ENCODE measurements at regions of chr9 and their contacts with region 1.

Region 1: DNA sequence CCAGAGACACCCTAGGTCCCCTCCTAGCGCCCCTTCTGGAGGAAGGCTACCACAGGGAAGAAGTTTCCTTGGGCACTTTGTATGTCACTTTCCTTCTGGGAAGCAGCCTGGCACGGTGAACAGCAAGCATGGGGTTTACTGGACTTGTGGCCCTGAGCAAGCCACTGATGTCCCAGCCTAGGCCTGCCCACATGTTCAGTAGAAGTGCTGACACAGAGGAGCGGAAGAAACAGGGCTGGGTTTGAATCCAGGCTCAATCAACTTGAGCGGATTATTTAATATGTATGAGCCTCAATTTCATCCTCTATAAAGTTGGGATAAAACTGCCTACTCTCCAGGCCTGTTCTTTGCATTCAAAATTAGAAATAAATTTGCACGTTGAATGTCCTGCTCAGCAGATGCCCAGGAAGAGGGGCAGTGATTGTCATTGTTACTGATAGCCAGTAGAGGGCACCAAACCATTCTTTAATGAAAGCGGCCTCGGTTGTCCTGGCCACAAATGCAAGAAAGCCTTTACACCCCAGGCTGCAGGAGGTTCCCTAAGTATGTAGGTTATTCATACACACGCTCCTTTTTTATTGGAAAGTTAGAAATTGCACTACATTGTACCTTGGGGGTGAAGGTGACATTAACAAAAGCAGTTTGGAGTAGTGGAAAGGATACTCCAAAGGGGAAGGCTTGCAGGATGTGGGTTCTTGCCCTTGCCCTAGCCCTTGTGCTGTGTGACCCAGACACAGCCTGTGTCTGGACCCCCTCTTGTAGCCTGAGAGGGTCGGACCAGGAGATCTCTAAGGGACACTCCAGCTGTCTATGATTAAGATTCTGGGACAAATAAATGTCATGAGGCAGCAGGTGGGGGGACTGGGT is 13.4 kb upstream of the XPA start:
- DNase-seq: peak; percentile 78
- ATAC-seq: peak; percentile 91
- H3K4me3 ChIP-seq: no peak overlapping the region
- H3K4me3 Mint-ChIP-seq: no peak overlapping the region
- H3K27ac ChIP-seq: no peak overlapping the region
- H3K27ac Mint-ChIP-seq: no peak overlapping the region
- H3K4me1 ChIP-seq: peaks cover 4 to 5% of the 10 kb centered on the region in 2 donors
- H3K4me1 Mint-ChIP-seq: peaks cover 6% of the 10 kb centered on the region
- H3K27me3 ChIP-seq: peaks cover 0 to 28% (median 7%) of the 10 kb centered on the region in 4 experiments
- H3K27me3 Mint-ChIP-seq: peaks cover 53% of the 10 kb centered on the region
- CTCF ChIP-seq: peak; percentile 89

Region 2: DNA sequence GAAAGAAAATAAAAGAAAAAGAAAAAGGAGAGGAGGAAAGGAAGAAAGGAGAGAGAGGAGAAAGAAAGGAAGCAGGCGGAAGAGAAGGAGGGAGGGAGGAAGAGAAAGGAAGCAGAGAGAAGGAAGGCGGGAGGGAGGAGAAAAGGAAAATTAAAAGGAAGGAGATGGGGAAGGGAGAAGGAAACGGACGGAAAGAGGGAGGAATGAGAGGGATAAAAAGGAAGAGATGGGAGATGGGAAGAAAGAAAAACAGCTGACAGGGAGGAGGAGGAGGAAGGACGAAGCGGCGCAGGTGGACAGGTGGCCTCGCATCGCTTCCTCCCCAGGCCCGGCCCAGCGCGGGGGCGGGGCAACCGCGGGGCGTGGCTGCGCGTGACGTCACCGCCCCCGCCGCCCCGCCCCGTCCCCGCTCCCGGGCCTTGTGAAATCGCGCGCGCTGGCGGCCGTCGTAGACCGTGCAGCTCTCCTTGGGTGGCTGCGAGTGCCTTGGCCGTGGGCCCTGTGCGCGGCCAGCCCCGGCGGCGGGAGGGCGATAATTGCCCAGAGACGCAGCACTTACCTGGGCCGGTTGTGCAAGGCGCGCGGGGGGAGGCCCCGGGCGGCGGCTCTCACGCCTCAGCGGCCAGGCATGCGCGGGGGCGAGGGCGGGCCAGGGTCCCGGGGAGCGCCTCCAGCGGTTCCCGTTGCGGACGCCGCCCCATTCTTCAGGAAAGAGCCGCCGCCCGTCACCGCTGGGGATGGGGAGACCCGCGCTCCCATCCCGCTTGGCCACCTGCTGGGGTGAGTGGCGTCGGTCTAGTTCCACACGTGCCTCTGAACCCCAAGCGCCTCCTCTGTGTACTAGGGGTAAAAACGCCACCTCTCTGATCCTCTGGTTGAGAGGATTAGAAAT is 92.8 kb after region 1 on chr9:
- CTCF ChIA-PET with region 1: no interaction called
- POLR2A ChIA-PET with region 1: no interaction called
- intact Hi-C with region 1: loop called (anchors 10 kb)
- DNase-seq: peak; percentile 84
- ATAC-seq: peak; percentile 94
- H3K4me3 ChIP-seq: peak overlapping the region in 4 of 5 experiments; percentile 36 to 64 (median 56)
- H3K4me3 Mint-ChIP-seq: peak overlapping the region; percentile 87
- H3K27ac ChIP-seq: no peak overlapping the region
- H3K27ac Mint-ChIP-seq: peak overlapping the region; percentile 20
- H3K4me1 ChIP-seq: peaks cover 7 to 9% of the 10 kb centered on the region in 2 donors
- H3K4me1 Mint-ChIP-seq: peaks cover 10% of the 10 kb centered on the region
- H3K27me3 ChIP-seq: peaks cover 0 to 20% (median 7%) of the 10 kb centered on the region in 4 experiments
- H3K27me3 Mint-ChIP-seq: peaks cover 30% of the 10 kb centered on the region
- CTCF ChIP-seq: peak; percentile 16

Region 3: GRCh38 chr9:97830884-97831829 is 120.6 kb after region 1 on chr9:
- CTCF ChIA-PET with region 1: no interaction called
- POLR2A ChIA-PET with region 1: no interaction called
- intact Hi-C with region 1: no loop called
- DNase-seq: no peak
- ATAC-seq: no peak
- H3K4me3 ChIP-seq: no peak overlapping the region
- H3K4me3 Mint-ChIP-seq: no peak overlapping the region
- H3K27ac ChIP-seq: no peak overlapping the region
- H3K27ac Mint-ChIP-seq: no peak overlapping the region
- H3K4me1 ChIP-seq: peaks cover 9 to 10% of the 10 kb centered on the region in 2 donors
- H3K4me1 Mint-ChIP-seq: peaks cover 11% of the 10 kb centered on the region
- H3K27me3 ChIP-seq: peaks cover 0 to 10% (median 0%) of the 10 kb centered on the region in 4 experiments
- H3K27me3 Mint-ChIP-seq: peaks cover 23% of the 10 kb centered on the region
- CTCF ChIP-seq: no peak

Region 4: DNA sequence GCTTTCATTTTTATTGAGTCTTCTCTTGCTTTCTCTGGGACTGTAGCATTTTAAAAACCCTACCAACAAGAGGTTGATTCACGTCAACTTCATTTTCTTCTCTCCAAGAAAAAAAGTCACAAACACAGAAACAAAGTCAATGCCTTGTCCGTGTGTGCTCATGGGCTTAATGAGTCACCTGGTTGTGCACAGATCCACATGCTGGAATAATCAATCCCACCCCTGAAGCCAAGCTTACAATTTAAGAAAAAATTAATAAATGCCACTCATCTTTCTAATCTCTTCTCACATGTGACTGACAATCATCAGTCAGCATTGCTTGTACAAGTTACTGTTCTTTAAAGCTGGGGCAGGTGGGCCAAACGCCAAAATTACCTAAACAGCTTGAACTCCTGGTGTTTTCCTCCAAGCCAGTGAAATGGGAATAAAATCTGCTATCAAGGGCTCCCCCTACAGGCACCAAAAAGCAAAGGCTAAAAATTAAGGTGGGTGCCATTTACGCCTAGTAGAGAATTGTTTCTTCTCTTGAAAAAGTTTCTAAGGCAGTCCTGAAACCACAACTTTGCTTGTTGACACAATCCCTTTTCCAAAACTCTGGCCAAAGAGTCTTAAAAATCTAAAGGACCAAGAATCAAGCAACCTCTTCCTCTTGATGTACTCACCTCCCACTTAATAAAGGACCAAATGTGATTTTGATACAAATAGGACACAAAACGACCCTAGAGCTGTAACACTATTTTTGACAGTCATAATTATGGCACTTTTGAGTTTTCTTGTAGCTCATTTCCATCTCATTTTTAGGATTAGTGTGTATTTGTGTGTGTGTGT is 190.4 kb after region 1 on chr9:
- CTCF ChIA-PET with region 1: interaction called, 18 read pairs
- POLR2A ChIA-PET with region 1: no interaction called
- intact Hi-C with region 1: loop called (anchors 1 kb)
- DNase-seq: peak; percentile 60
- ATAC-seq: no peak
- H3K4me3 ChIP-seq: no peak overlapping the region
- H3K4me3 Mint-ChIP-seq: no peak overlapping the region
- H3K27ac ChIP-seq: no peak overlapping the region
- H3K27ac Mint-ChIP-seq: no peak overlapping the region
- H3K4me1 ChIP-seq: peaks cover 2 to 9% of the 10 kb centered on the region in 2 donors
- H3K4me1 Mint-ChIP-seq: peaks cover 17% of the 10 kb centered on the region
- H3K27me3 ChIP-seq: no peaks in the 10 kb centered on the region
- H3K27me3 Mint-ChIP-seq: no peaks in the 10 kb centered on the region
- CTCF ChIP-seq: peak; percentile 81

Region 5: GRCh38 chr9:97954550-97954989 is 244.0 kb after region 1 on chr9:
- CTCF ChIA-PET with region 1: no interaction called
- POLR2A ChIA-PET with region 1: no interaction called
- intact Hi-C with region 1: loop called (anchors 1 kb)
- DNase-seq: peak; percentile 68
- ATAC-seq: peak; percentile 73
- H3K4me3 ChIP-seq: no peak overlapping the region
- H3K4me3 Mint-ChIP-seq: no peak overlapping the region
- H3K27ac ChIP-seq: no peak overlapping the region
- H3K27ac Mint-ChIP-seq: no peak overlapping the region
- H3K4me1 ChIP-seq: no peaks in the 10 kb centered on the region
- H3K4me1 Mint-ChIP-seq: no peaks in the 10 kb centered on the region
- H3K27me3 ChIP-seq: peaks cover 0 to 6% (median 3%) of the 10 kb centered on the region in 4 experiments
- H3K27me3 Mint-ChIP-seq: peaks cover 15% of the 10 kb centered on the region
- CTCF ChIP-seq: peak; percentile 76

Region 6: GRCh38 chr9:98034593-98035546 is 324.3 kb after region 1 on chr9:
- CTCF ChIA-PET with region 1: no interaction called
- POLR2A ChIA-PET with region 1: no interaction called
- intact Hi-C with region 1: loop called (anchors 1 kb)
- DNase-seq: peak; percentile 91
- ATAC-seq: peak; percentile 87
- H3K4me3 ChIP-seq: peak overlapping the region in 1 of 5 experiments; percentile 38
- H3K4me3 Mint-ChIP-seq: peak overlapping the region; percentile 53
- H3K27ac ChIP-seq: peak overlapping the region; percentile 1 to 34
- H3K27ac Mint-ChIP-seq: peak overlapping the region; percentile 57
- H3K4me1 ChIP-seq: peaks cover 10 to 25% of the 10 kb centered on the region in 2 donors
- H3K4me1 Mint-ChIP-seq: peaks cover 37% of the 10 kb centered on the region
- H3K27me3 ChIP-seq: no peaks in the 10 kb centered on the region
- H3K27me3 Mint-ChIP-seq: no peaks in the 10 kb centered on the region
- CTCF ChIP-seq: peak; percentile 78

Region 7: DNA sequence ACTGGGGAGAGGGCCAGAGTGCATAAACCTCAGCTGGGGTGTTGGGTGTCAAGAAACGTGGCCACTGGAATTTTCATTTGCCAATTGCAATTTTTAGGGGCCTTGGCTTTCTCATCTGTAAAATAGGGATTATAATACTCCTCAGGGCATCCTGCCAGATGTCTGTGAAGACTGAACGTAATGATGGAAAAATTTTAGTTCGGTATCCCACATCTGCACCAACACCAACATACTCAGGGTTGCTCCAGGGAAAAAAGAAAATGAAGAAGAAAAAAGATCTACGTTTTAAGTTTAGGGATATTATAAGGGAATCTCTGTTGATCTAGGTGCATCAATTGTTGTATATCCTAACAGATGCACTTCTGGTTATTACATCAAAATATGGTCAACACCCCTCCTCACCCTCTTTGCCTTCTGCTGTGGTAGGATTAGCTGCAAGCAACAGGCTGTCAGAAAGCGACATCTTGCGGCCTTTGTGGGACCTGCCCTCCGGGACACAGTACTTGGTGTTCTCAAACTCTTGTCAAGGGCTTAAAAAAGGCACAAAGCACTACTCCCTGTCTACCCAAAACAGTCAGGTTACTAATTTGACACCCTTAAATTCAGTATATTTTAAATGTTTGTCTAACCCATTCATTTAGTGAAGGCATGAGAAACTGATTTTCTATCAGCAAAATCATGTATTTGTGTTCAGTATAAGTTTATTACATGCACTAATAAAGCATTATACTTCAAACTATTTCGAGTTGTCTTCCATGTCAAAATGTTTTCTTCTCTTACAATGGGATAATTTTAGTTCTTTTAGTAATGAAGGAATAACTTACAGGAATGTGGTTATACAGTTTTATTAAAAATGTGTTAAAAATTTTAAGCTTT is 553.1 kb after region 1 on chr9:
- CTCF ChIA-PET with region 1: interaction called, 5 read pairs
- POLR2A ChIA-PET with region 1: no interaction called
- intact Hi-C with region 1: loop called (anchors 5 kb)
- DNase-seq: peak; percentile 85
- ATAC-seq: peak; percentile 100
- H3K4me3 ChIP-seq: no peak overlapping the region
- H3K4me3 Mint-ChIP-seq: no peak overlapping the region
- H3K27ac ChIP-seq: no peak overlapping the region
- H3K27ac Mint-ChIP-seq: no peak overlapping the region
- H3K4me1 ChIP-seq: no peaks in the 10 kb centered on the region
- H3K4me1 Mint-ChIP-seq: no peaks in the 10 kb centered on the region
- H3K27me3 ChIP-seq: no peaks in the 10 kb centered on the region
- H3K27me3 Mint-ChIP-seq: peaks cover 21% of the 10 kb centered on the region
- CTCF ChIP-seq: peak; percentile 94